ENCODE measurements at regions of chr12 and their contacts with region 1.

Region 1: DNA sequence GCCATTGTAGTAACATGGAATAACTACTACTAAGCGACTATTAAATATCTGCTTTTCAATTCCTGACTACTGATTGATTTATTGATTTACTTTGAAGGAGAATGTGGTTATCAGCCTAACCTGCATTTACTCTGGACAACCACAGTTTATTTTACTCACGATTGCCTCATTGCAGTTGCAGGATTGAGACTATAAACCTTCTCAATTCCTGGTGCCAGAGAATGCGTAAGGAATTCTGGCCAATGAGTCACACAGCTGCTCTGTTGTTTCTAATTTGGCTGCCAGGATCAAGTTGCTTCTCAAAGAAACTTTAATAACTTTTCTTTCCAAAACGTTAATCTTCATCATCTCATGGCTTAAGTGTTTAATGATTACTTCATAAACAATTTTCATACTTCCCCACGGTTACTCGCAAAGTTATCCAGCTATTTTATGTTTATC is 13.1 kb upstream of the TMTC1 start:
- DNase-seq: peak; percentile 60
- H3K4me3 ChIP-seq: no peak overlapping the region
- H3K27ac ChIP-seq: no peak overlapping the region
- H3K4me1 ChIP-seq: no peaks in the 10 kb centered on the region
- H3K27me3 ChIP-seq: no peaks in the 10 kb centered on the region
- CTCF ChIP-seq: peak in 1 of 4 experiments; percentile 30
- POLR2A ChIP-seq: no peak

Region 2: DNA sequence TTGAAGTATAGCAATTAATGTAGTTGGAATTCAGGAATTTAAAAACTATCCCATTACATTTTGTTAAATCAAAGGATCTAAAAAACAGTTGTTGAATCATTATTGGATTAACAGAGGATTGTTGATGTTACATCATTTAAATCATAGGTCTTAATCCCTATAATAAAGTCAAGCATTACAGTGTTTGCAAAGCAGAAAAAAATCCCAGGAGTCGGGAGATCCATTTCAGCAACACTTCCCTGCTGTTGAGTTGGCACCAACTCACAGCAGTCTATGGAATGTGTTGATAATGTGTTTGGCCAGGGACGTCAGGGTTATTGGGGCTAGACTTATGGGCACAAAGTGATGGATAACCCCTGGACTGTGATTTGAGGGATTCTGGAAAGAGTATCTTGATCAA is 86.0 kb after region 1 on chr12:
- intact Hi-C with region 1: loop called (anchors 5 kb)
- DNase-seq: no peak
- H3K4me3 ChIP-seq: no peak overlapping the region
- H3K27ac ChIP-seq: no peak overlapping the region
- H3K4me1 ChIP-seq: no peaks in the 10 kb centered on the region
- H3K27me3 ChIP-seq: no peaks in the 10 kb centered on the region
- CTCF ChIP-seq: no peak
- POLR2A ChIP-seq: no peak

Measured in prostate gland (tissue), 2 donors.